CD4-positive, alpha-beta T cell (primary cell): ENCODE measurements at regions of chr3 and their contacts with region 1.

Region 1: DNA sequence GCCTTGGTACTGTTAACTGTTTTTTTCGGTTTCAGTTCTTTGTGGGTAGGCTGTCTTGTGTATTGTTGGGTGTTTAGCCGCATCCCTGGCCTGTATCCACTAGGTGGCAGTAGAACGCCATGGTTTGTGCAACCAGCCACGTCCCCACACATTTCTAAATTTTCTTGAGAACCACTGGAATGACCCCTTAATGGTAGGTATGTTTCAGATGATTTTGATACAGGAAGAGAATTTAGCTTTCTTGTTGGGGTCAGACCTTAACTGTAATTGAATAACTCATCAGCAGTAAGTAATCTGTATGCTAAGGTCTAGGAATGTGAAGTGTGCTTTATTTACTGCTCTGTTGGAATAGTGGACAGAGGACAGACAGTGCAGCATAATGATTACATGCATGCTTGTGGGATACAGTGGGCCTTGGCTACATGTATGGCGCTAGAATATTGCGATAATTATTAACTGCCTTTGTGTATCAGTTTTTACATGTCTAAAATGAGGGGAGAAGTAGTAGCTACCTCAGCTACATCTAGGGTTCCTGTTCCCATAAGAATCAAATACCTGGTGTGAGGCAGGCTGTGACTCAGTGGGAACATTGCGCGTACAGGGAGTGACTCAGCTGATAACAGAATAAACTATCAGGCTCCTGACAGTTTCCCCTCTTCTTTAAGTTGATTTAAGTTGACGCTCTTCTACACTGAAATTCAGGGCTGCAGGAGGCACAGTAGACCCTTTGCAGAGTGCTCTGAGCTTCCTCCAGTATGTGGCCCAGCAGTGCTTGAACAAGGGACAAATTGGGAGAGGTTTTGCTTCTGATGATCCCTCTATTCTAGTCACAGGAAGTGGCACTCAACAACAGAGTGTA is 25.0 kb upstream of the GPR171 start:
- DNase-seq: peak; percentile 61 to 89 (median 72)
- ATAC-seq: peak; percentile 91
- H3K4me3 ChIP-seq: no peak overlapping the region
- H3K4me3 Mint-ChIP-seq: no peak overlapping the region
- H3K27ac ChIP-seq: no peak overlapping the region
- H3K27ac Mint-ChIP-seq: no peak overlapping the region
- H3K4me1 ChIP-seq: peaks cover 31% of the 10 kb centered on the region
- H3K4me1 Mint-ChIP-seq: peaks cover 40% of the 10 kb centered on the region
- H3K27me3 ChIP-seq: no peaks in the 10 kb centered on the region
- H3K27me3 Mint-ChIP-seq: no peaks in the 10 kb centered on the region
- CTCF ChIP-seq: peak; percentile 88

Region 2: DNA sequence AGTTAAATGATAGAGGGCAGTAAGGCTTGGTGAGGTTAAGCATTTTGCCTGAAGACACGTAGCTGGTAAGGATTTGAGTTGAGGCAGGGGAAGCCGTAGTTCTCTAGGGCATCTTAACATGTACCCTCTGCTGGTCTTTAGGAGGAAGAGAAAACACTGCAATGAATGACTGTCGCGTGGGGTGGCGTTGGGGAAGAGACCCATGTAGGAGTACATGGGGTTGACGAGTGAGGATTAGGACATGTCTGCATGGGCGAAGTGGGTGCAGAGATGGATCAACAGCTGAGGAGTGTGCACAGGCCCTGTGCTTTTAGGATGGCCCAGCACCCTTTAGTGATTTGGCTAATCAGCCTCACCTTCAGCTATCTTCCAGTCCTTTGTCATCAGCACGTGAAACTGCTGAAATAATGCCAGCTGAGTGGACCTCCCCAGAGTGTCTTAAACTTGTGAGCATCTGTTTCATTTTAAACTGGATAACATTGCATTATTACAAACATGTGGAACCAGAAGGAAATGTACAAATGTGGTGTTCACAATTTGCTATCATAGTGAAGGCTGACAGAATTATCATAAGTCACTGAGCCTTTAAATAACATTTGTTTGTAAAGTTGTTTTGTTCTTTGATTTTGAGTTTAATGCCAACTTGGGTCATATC is 35.0 kb after region 1 on chr3:
- CTCF ChIA-PET with region 1: no interaction called
- POLR2A ChIA-PET with region 1: no interaction called
- intact Hi-C with region 1: no loop called
- DNase-seq: no peak
- ATAC-seq: no peak
- H3K4me3 ChIP-seq: no peak overlapping the region
- H3K4me3 Mint-ChIP-seq: no peak overlapping the region
- H3K27ac ChIP-seq: no peak overlapping the region
- H3K27ac Mint-ChIP-seq: no peak overlapping the region
- H3K4me1 ChIP-seq: no peaks in the 10 kb centered on the region
- H3K4me1 Mint-ChIP-seq: no peaks in the 10 kb centered on the region
- H3K27me3 ChIP-seq: no peaks in the 10 kb centered on the region
- H3K27me3 Mint-ChIP-seq: no peaks in the 10 kb centered on the region
- CTCF ChIP-seq: no peak

Region 3: DNA sequence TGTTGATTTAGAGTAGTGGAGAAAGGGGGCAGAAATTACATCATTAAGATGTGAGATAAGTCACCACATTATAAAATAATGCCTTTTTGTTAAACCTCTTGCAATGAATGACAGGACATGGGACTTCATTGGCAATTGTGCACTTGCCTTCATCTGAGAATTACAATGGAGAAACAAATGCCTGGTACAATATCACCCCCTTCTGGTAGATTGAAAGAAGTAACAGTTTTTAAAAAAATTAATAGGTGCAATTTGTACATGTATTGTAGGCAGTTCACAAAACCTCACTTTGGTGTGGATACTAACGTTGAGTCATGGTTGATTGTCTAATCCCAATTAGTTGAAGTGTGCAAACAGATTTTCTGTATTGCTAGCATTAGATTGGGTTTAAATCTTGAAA is 54.9 kb after region 1 on chr3:
- CTCF ChIA-PET with region 1: interaction called, 8 read pairs
- POLR2A ChIA-PET with region 1: interaction called, 3 read pairs
- intact Hi-C with region 1: loop called (anchors 1 kb)
- DNase-seq: peak in 3 of 14 experiments; percentile 72 to 79 (median 78)
- ATAC-seq: peak; percentile 68
- H3K4me3 ChIP-seq: no peak overlapping the region
- H3K4me3 Mint-ChIP-seq: no peak overlapping the region
- H3K27ac ChIP-seq: no peak overlapping the region
- H3K27ac Mint-ChIP-seq: no peak overlapping the region
- H3K4me1 ChIP-seq: peaks cover 11% of the 10 kb centered on the region
- H3K4me1 Mint-ChIP-seq: peaks cover 27% of the 10 kb centered on the region
- H3K27me3 ChIP-seq: no peaks in the 10 kb centered on the region
- H3K27me3 Mint-ChIP-seq: no peaks in the 10 kb centered on the region
- CTCF ChIP-seq: peak; percentile 83

Region 4: DNA sequence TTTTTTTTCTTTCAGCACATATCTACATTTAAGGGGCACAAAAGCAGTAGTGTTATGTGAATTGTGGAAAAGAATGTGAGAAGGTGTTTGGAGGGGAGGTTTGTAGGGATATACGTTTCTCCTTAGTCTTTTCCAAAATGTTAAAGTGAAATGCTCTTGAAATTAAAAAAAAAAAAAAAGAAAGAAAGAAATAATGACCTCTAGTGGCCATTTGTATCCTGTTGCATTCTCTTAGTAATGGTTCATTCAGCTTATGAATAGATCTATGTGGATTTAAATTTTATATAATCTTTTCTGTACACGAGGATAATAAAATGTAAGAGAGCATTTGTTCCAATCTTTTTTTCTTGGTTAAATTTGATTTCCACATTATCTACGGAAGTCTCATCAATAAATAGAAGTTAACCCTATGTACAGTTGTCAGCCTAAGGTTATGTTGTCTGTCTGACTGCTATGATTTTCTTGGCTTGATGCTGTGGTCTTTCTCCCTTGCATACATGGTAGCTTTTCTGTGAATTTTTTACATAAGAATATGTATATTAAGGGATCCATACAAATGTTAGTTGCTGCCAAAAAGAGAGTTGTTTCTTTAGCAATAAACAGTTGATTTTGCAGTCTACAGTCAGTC is 99.6 kb after region 1 on chr3:
- CTCF ChIA-PET with region 1: no interaction called
- POLR2A ChIA-PET with region 1: no interaction called
- intact Hi-C with region 1: loop called (anchors 2 to 5 kb)
- DNase-seq: no peak
- ATAC-seq: no peak
- H3K4me3 ChIP-seq: peak overlapping the region; percentile 34
- H3K4me3 Mint-ChIP-seq: no peak overlapping the region
- H3K27ac ChIP-seq: no peak overlapping the region
- H3K27ac Mint-ChIP-seq: no peak overlapping the region
- H3K4me1 ChIP-seq: no peaks in the 10 kb centered on the region
- H3K4me1 Mint-ChIP-seq: no peaks in the 10 kb centered on the region
- H3K27me3 ChIP-seq: no peaks in the 10 kb centered on the region
- H3K27me3 Mint-ChIP-seq: peaks cover 19% of the 10 kb centered on the region
- CTCF ChIP-seq: peak; percentile 73

Region 5: GRCh38 chr3:151404316-151404715 is 176.3 kb after region 1 on chr3:
- CTCF ChIA-PET with region 1: no interaction called
- POLR2A ChIA-PET with region 1: no interaction called
- intact Hi-C with region 1: no loop called
- DNase-seq: no peak
- ATAC-seq: no peak
- H3K4me3 ChIP-seq: no peak overlapping the region
- H3K4me3 Mint-ChIP-seq: no peak overlapping the region
- H3K27ac ChIP-seq: no peak overlapping the region
- H3K27ac Mint-ChIP-seq: no peak overlapping the region
- H3K4me1 ChIP-seq: no peaks in the 10 kb centered on the region
- H3K4me1 Mint-ChIP-seq: no peaks in the 10 kb centered on the region
- H3K27me3 ChIP-seq: no peaks in the 10 kb centered on the region
- H3K27me3 Mint-ChIP-seq: peaks cover 4% of the 10 kb centered on the region
- CTCF ChIP-seq: no peak

Region 6: DNA sequence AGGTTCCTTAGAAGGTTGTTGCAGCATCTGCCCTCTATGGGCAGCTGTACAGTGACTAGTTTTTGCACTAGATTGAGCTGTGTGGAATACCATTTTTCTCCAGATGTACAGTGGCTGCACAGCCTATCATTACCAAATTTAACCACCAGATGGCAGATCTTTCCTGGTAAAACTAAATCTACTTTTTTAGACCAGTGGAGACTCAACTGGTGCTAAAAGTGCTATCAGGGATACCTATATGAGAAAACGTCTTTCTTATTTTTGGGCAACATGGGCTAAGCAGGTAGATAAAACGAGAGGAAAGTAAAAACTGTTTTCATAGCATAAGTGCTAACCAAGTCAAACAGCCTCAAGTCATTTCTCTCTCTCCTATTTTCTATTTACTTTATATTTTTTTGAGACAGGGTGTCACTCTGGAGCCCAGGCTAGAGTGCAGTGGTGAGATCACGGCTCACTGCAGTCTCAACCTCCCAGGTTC is 211.7 kb after region 1 on chr3:
- CTCF ChIA-PET with region 1: no interaction called
- POLR2A ChIA-PET with region 1: no interaction called
- intact Hi-C with region 1: loop called in 1 of 2 experiments (anchors 10 kb)
- DNase-seq: peak in 4 of 14 experiments; percentile 4 to 58 (median 44)
- ATAC-seq: peak; percentile 46
- H3K4me3 ChIP-seq: no peak overlapping the region
- H3K4me3 Mint-ChIP-seq: no peak overlapping the region
- H3K27ac ChIP-seq: no peak overlapping the region
- H3K27ac Mint-ChIP-seq: no peak overlapping the region
- H3K4me1 ChIP-seq: no peaks in the 10 kb centered on the region
- H3K4me1 Mint-ChIP-seq: no peaks in the 10 kb centered on the region
- H3K27me3 ChIP-seq: no peaks in the 10 kb centered on the region
- H3K27me3 Mint-ChIP-seq: peaks cover 4% of the 10 kb centered on the region
- CTCF ChIP-seq: peak; percentile 73

Region 7: GRCh38 chr3:151526757-151527156 is 298.7 kb after region 1 on chr3:
- CTCF ChIA-PET with region 1: no interaction called
- POLR2A ChIA-PET with region 1: no interaction called
- intact Hi-C with region 1: no loop called
- DNase-seq: no peak
- ATAC-seq: no peak
- H3K4me3 ChIP-seq: no peak overlapping the region
- H3K4me3 Mint-ChIP-seq: no peak overlapping the region
- H3K27ac ChIP-seq: no peak overlapping the region
- H3K27ac Mint-ChIP-seq: no peak overlapping the region
- H3K4me1 ChIP-seq: no peaks in the 10 kb centered on the region
- H3K4me1 Mint-ChIP-seq: no peaks in the 10 kb centered on the region
- H3K27me3 ChIP-seq: no peaks in the 10 kb centered on the region
- H3K27me3 Mint-ChIP-seq: peaks cover 12% of the 10 kb centered on the region
- CTCF ChIP-seq: no peak

Region 8: GRCh38 chr3:151838583-151839312 is 610.7 kb after region 1 on chr3:
- CTCF ChIA-PET with region 1: no interaction called
- POLR2A ChIA-PET with region 1: no interaction called
- intact Hi-C with region 1: loop called (anchors 1 to 2 kb)
- DNase-seq: peak in 9 of 14 experiments; percentile 2 to 68 (median 10)
- ATAC-seq: no peak
- H3K4me3 ChIP-seq: no peak overlapping the region
- H3K4me3 Mint-ChIP-seq: no peak overlapping the region
- H3K27ac ChIP-seq: no peak overlapping the region
- H3K27ac Mint-ChIP-seq: no peak overlapping the region
- H3K4me1 ChIP-seq: no peaks in the 10 kb centered on the region
- H3K4me1 Mint-ChIP-seq: no peaks in the 10 kb centered on the region
- H3K27me3 ChIP-seq: peaks cover 0 to 3% of the 10 kb centered on the region in 2 experiments
- H3K27me3 Mint-ChIP-seq: peaks cover 14% of the 10 kb centered on the region
- CTCF ChIP-seq: peak; percentile 61

Region 9: GRCh38 chr3:151918253-151919029 is 690.4 kb after region 1 on chr3:
- CTCF ChIA-PET with region 1: no interaction called
- POLR2A ChIA-PET with region 1: no interaction called
- intact Hi-C with region 1: loop called in 1 of 2 experiments (anchors 5 kb)
- DNase-seq: peak in 3 of 14 experiments; percentile 49 to 59 (median 54)
- ATAC-seq: peak; percentile 34
- H3K4me3 ChIP-seq: no peak overlapping the region
- H3K4me3 Mint-ChIP-seq: no peak overlapping the region
- H3K27ac ChIP-seq: no peak overlapping the region
- H3K27ac Mint-ChIP-seq: no peak overlapping the region
- H3K4me1 ChIP-seq: no peaks in the 10 kb centered on the region
- H3K4me1 Mint-ChIP-seq: no peaks in the 10 kb centered on the region
- H3K27me3 ChIP-seq: no peaks in the 10 kb centered on the region
- H3K27me3 Mint-ChIP-seq: no peaks in the 10 kb centered on the region
- CTCF ChIP-seq: peak; percentile 68